CD8-positive, alpha-beta T cell (primary cell): ENCODE measurements at regions of chr19 and their contacts with region 1.

Region 1: DNA sequence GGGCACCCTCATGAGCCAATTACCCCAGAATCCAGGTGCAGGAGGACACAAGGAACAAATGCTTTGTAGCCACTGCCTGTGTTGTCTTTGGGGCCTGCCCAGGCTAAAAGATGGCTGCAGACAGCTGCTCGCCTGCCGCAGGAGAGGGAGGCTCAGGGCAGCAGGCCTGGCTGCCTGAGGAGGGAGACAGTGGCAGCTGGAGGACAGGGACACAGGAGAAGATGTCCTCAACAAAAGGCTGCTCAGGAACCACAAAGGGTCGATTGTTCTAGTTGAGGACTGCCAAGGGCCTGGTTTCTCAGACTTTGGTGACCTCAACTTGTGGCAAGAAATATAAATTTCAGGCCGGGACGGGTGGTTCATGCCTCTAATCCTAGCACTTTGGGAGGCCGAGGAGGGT is 7.6 kb downstream of the SIRT2 start:
- DNase-seq: no peak
- ATAC-seq: no peak
- H3K4me3 ChIP-seq: no peak overlapping the region
- H3K4me3 Mint-ChIP-seq: no peak overlapping the region
- H3K27ac ChIP-seq: no peak overlapping the region
- H3K27ac Mint-ChIP-seq: no peak overlapping the region
- H3K4me1 ChIP-seq: peaks cover 3% of the 10 kb centered on the region
- H3K4me1 Mint-ChIP-seq: peaks cover 9% of the 10 kb centered on the region
- H3K27me3 ChIP-seq: no peaks in the 10 kb centered on the region
- H3K27me3 Mint-ChIP-seq: no peaks in the 10 kb centered on the region
- CTCF ChIP-seq: no peak

Region 2: GRCh38 chr19:38402967-38403861 is 488.6 kb before region 1 on chr19 and contains the start of gene FAM98C:
- CTCF ChIA-PET with region 1: interaction called, 10 read pairs
- POLR2A ChIA-PET with region 1: interaction called, 4 read pairs
- intact Hi-C with region 1: loop called (anchors 1 to 5 kb)
- DNase-seq: peak; percentile 95 to 99 (median 97)
- ATAC-seq: peak; percentile 96
- H3K4me3 ChIP-seq: peak within 1 kb of the TSS; percentile 76 to 95
- H3K4me3 Mint-ChIP-seq: peak within 1 kb of the TSS; percentile 94
- H3K27ac ChIP-seq: peak within 1 kb of the TSS; percentile 79 to 81
- H3K27ac Mint-ChIP-seq: peak within 1 kb of the TSS; percentile 98
- H3K4me1 ChIP-seq: peaks cover 11% of the 10 kb centered on the region
- H3K4me1 Mint-ChIP-seq: peaks cover 15% of the 10 kb centered on the region
- H3K27me3 ChIP-seq: no peaks in the 10 kb centered on the region
- H3K27me3 Mint-ChIP-seq: no peaks in the 10 kb centered on the region
- CTCF ChIP-seq: peak; percentile 95
- total RNA-seq, gene FAM98C: 28.2 to 29.3 TPM

Region 3: GRCh38 chr19:38661136-38661535 is 230.6 kb before region 1 on chr19:
- CTCF ChIA-PET with region 1: no interaction called
- POLR2A ChIA-PET with region 1: no interaction called
- intact Hi-C with region 1: no loop called
- DNase-seq: no peak
- ATAC-seq: no peak
- H3K4me3 ChIP-seq: no peak overlapping the region
- H3K4me3 Mint-ChIP-seq: no peak overlapping the region
- H3K27ac ChIP-seq: peak overlapping the region in 1 of 2 experiments; percentile 34
- H3K27ac Mint-ChIP-seq: no peak overlapping the region
- H3K4me1 ChIP-seq: peaks cover 62% of the 10 kb centered on the region
- H3K4me1 Mint-ChIP-seq: peaks cover 63% of the 10 kb centered on the region
- H3K27me3 ChIP-seq: peaks cover 0 to 20% of the 10 kb centered on the region in 2 experiments
- H3K27me3 Mint-ChIP-seq: peaks cover 25% of the 10 kb centered on the region
- CTCF ChIP-seq: no peak

Region 4: DNA sequence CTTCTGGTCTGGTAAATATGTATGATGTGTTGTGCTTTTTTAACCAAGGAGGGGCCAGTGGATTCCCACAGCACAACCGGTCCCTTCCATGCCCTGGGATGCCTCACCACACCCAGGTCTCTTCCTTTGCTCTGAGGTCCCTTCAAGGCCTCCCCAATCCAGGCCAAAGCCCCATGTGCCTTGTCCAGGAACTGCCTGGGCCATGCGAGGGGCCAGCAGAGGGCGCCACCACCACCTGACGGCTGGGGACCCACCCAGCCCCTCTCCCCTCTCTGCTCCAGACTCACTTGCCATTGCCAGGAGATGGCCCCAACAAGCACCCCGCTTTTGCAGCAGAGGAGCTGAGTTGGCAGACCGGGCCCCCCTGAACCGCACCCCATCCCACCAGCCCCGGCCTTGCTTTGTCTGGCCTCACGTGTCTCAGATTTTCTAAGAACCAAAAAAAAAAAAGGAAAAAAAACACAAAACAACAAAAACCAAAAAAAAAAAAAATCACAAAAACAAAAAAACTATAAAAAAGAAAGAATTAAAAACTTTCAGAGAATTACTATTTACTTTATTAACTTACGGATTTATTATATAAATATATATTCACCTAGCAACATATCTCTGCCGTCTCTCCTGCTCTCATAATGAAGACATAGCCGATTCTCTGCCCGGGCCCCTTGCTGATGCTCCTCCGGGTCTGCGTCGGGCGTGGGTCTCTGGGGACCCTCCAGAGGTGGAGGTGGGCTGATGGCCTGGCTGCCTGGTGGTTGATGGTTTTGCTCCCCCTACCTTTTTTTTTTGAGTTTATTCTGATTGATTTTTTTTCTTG is 161.9 kb before region 1 on chr19:
- CTCF ChIA-PET with region 1: interaction called, 4 read pairs
- POLR2A ChIA-PET with region 1: no interaction called
- intact Hi-C with region 1: loop called (anchors 1 kb)
- DNase-seq: peak; percentile 47 to 86 (median 79)
- ATAC-seq: peak; percentile 62
- H3K4me3 ChIP-seq: no peak overlapping the region
- H3K4me3 Mint-ChIP-seq: no peak overlapping the region
- H3K27ac ChIP-seq: no peak overlapping the region
- H3K27ac Mint-ChIP-seq: no peak overlapping the region
- H3K4me1 ChIP-seq: peaks cover 17% of the 10 kb centered on the region
- H3K4me1 Mint-ChIP-seq: peaks cover 32% of the 10 kb centered on the region
- H3K27me3 ChIP-seq: no peaks in the 10 kb centered on the region
- H3K27me3 Mint-ChIP-seq: no peaks in the 10 kb centered on the region
- CTCF ChIP-seq: peak; percentile 75

Region 5: GRCh38 chr19:38769635-38770211 is 122.0 kb before region 1 on chr19:
- CTCF ChIA-PET with region 1: interaction called, 4 read pairs
- POLR2A ChIA-PET with region 1: no interaction called
- intact Hi-C with region 1: loop called (anchors 5 kb)
- DNase-seq: peak; percentile 80 to 98 (median 93)
- ATAC-seq: peak; percentile 85
- H3K4me3 ChIP-seq: peak overlapping the region; percentile 38 to 41
- H3K4me3 Mint-ChIP-seq: peak overlapping the region; percentile 68
- H3K27ac ChIP-seq: peak overlapping the region in 1 of 2 experiments; percentile 77
- H3K27ac Mint-ChIP-seq: peak overlapping the region; percentile 60
- H3K4me1 ChIP-seq: peaks cover 5% of the 10 kb centered on the region
- H3K4me1 Mint-ChIP-seq: peaks cover 5% of the 10 kb centered on the region
- H3K27me3 ChIP-seq: no peaks in the 10 kb centered on the region
- H3K27me3 Mint-ChIP-seq: no peaks in the 10 kb centered on the region
- CTCF ChIP-seq: peak; percentile 65

Region 6: GRCh38 chr19:38795549-38795948 is 96.2 kb before region 1 on chr19:
- CTCF ChIA-PET with region 1: no interaction called
- POLR2A ChIA-PET with region 1: no interaction called
- intact Hi-C with region 1: no loop called
- DNase-seq: no peak
- ATAC-seq: no peak
- H3K4me3 ChIP-seq: no peak overlapping the region
- H3K4me3 Mint-ChIP-seq: no peak overlapping the region
- H3K27ac ChIP-seq: no peak overlapping the region
- H3K27ac Mint-ChIP-seq: no peak overlapping the region
- H3K4me1 ChIP-seq: peaks cover 7% of the 10 kb centered on the region
- H3K4me1 Mint-ChIP-seq: peaks cover 4% of the 10 kb centered on the region
- H3K27me3 ChIP-seq: no peaks in the 10 kb centered on the region
- H3K27me3 Mint-ChIP-seq: no peaks in the 10 kb centered on the region
- CTCF ChIP-seq: no peak

Region 7: DNA sequence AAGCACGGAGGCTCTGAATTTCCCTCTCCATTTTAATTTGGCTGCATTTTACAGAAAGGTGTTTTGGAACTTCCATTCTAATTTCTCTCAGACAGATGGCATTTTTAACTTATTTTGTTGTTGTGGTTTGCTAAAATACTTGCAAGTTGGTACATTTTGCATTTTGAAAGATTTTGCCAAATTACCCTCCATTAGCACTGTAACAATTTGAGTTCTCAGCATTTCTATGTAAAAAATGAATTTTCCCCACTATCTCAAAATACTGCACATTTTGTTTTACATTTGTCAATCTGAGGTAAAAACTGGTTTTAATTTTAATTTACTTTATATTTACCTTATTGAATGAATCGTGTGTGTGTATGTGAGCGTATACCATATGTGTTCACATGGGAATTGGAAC is 35.0 kb before region 1 on chr19:
- CTCF ChIA-PET with region 1: interaction called, 12 read pairs
- POLR2A ChIA-PET with region 1: no interaction called
- intact Hi-C with region 1: no loop called
- DNase-seq: no peak
- ATAC-seq: no peak
- H3K4me3 ChIP-seq: no peak overlapping the region
- H3K4me3 Mint-ChIP-seq: peak overlapping the region; percentile 56
- H3K27ac ChIP-seq: peak overlapping the region; percentile 21 to 66
- H3K27ac Mint-ChIP-seq: peak overlapping the region; percentile 72
- H3K4me1 ChIP-seq: peaks cover 22% of the 10 kb centered on the region
- H3K4me1 Mint-ChIP-seq: peaks cover 30% of the 10 kb centered on the region
- H3K27me3 ChIP-seq: no peaks in the 10 kb centered on the region
- H3K27me3 Mint-ChIP-seq: no peaks in the 10 kb centered on the region
- CTCF ChIP-seq: no peak

Region 8: GRCh38 chr19:38869856-38870607 is 21.7 kb before region 1 on chr19:
- CTCF ChIA-PET with region 1: interaction called, 13 read pairs
- POLR2A ChIA-PET with region 1: interaction called, 3 read pairs
- intact Hi-C with region 1: no loop called
- DNase-seq: peak; percentile 89 to 98 (median 94)
- ATAC-seq: peak; percentile 88
- H3K4me3 ChIP-seq: peak overlapping the region; percentile 75 to 79
- H3K4me3 Mint-ChIP-seq: peak overlapping the region; percentile 84
- H3K27ac ChIP-seq: peak overlapping the region; percentile 50 to 79
- H3K27ac Mint-ChIP-seq: peak overlapping the region; percentile 89
- H3K4me1 ChIP-seq: peaks cover 46% of the 10 kb centered on the region
- H3K4me1 Mint-ChIP-seq: peaks cover 50% of the 10 kb centered on the region
- H3K27me3 ChIP-seq: no peaks in the 10 kb centered on the region
- H3K27me3 Mint-ChIP-seq: no peaks in the 10 kb centered on the region
- CTCF ChIP-seq: peak; percentile 84

Region 9: DNA sequence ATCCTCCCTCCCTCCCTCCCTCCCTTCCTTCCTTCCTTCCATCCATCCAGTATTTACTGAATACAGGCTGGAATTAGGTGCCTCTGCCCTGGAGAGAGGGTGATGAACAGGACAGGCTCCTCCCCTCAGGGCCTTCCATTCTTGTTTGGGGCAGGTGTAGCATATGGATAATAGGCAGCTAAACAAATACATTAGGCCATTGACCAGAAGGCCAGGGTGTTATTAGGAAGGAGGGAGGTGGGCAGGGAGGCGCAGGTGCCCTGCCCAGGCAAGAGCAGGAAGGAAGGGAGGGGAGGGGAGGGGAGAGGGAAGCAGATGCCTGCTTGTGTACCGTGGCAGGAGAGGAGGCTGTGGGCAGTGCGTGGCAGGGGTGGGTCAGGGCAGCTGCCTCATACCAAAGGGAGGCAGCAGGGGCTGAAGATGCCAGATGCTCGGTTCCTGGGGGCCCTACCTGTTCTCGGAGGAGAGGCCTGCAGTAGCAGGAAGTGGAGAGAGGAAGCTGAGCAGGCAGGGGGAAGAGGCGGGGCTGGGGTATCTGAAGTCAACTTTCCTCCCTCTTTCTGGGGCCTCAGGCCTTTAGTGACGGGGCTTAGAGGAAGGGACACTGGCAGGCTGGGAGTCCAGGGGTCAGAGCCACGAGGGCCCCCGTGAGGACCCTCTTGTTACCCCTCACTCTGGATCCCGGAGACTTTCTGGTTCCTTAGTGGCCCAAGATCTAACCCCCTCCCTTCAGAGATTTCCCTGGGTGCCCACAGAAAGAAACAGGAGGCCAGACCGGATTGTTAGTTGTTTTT is 13.8 kb before region 1 on chr19 and contains the start of gene RINL:
- CTCF ChIA-PET with region 1: interaction called, 26 read pairs
- POLR2A ChIA-PET with region 1: interaction called, 7 read pairs
- intact Hi-C with region 1: no loop called
- DNase-seq: peak in 8 of 9 experiments; percentile 63 to 85 (median 76)
- ATAC-seq: peak; percentile 94
- H3K4me3 ChIP-seq: peak within 1 kb of the TSS; percentile 52 to 65
- H3K4me3 Mint-ChIP-seq: peak within 1 kb of the TSS; percentile 87
- H3K27ac ChIP-seq: peak within 1 kb of the TSS; percentile 79 to 95
- H3K27ac Mint-ChIP-seq: peak within 1 kb of the TSS; percentile 97
- H3K4me1 ChIP-seq: peaks cover 36% of the 10 kb centered on the region
- H3K4me1 Mint-ChIP-seq: peaks cover 37% of the 10 kb centered on the region
- H3K27me3 ChIP-seq: no peaks in the 10 kb centered on the region
- H3K27me3 Mint-ChIP-seq: no peaks in the 10 kb centered on the region
- CTCF ChIP-seq: no peak
- total RNA-seq, gene RINL: 18.1 to 18.4 TPM

Region 10: DNA sequence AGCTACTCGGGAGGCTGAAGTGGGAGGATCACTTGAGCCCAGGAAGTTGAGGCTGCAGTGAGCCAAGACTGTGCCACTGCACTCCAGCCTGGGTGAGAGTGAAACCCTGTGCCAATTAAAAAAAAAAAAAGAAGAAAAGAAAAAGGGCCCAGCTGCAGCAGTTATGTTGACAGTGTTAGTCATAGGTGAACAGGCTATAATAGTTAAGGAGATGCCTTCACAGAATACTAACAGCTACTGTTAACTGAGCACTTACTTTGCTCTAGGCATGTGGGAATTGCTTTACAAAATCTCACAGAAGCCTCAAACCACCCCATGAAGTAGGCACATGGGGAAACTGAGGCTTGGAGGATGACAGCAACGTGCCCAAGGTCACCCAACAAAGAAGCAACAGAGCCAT is 79.9 kb after region 1 on chr19:
- CTCF ChIA-PET with region 1: no interaction called
- POLR2A ChIA-PET with region 1: no interaction called
- intact Hi-C with region 1: no loop called
- DNase-seq: no peak
- ATAC-seq: no peak
- H3K4me3 ChIP-seq: no peak overlapping the region
- H3K4me3 Mint-ChIP-seq: no peak overlapping the region
- H3K27ac ChIP-seq: no peak overlapping the region
- H3K27ac Mint-ChIP-seq: no peak overlapping the region
- H3K4me1 ChIP-seq: peaks cover 4% of the 10 kb centered on the region
- H3K4me1 Mint-ChIP-seq: peaks cover 8% of the 10 kb centered on the region
- H3K27me3 ChIP-seq: peaks cover 5 to 11% of the 10 kb centered on the region in 2 experiments
- H3K27me3 Mint-ChIP-seq: peaks cover 26% of the 10 kb centered on the region
- CTCF ChIP-seq: no peak